Esophagus muscularis mucosa (tissue), 4 donors: ENCODE measurements at regions of chr2 and their contacts with region 1.

Region 1: GRCh38 chr2:207166039-207166348 is 246 bp upstream of the KLF7 start:
- DNase-seq: peak; percentile 100
- H3K4me3 ChIP-seq: peak overlapping the region; percentile 78 to 90 (median 82)
- H3K27ac ChIP-seq: peak overlapping the region; percentile 100
- H3K4me1 ChIP-seq: peaks cover 32 to 42% (median 40%) of the 10 kb centered on the region in 4 donors
- H3K27me3 ChIP-seq: no peaks in the 10 kb centered on the region
- CTCF ChIP-seq: no peak
- EP300 ChIP-seq: no peak
- POLR2A ChIP-seq: no peak

Region 2: GRCh38 chr2:207073801-207074678 is 92.0 kb before region 1 on chr2:
- intact Hi-C with region 1: loop called (anchors 10 kb)
- DNase-seq: no peak
- H3K4me3 ChIP-seq: peak overlapping the region in 1 of 4 donors; percentile 3
- H3K27ac ChIP-seq: peak overlapping the region in 3 of 4 donors; percentile 22 to 50 (median 39)
- H3K4me1 ChIP-seq: peaks cover 5 to 23% (median 19%) of the 10 kb centered on the region in 4 donors
- H3K27me3 ChIP-seq: no peaks in the 10 kb centered on the region
- CTCF ChIP-seq: no peak
- EP300 ChIP-seq: no peak
- POLR2A ChIP-seq: no peak

Region 3: DNA sequence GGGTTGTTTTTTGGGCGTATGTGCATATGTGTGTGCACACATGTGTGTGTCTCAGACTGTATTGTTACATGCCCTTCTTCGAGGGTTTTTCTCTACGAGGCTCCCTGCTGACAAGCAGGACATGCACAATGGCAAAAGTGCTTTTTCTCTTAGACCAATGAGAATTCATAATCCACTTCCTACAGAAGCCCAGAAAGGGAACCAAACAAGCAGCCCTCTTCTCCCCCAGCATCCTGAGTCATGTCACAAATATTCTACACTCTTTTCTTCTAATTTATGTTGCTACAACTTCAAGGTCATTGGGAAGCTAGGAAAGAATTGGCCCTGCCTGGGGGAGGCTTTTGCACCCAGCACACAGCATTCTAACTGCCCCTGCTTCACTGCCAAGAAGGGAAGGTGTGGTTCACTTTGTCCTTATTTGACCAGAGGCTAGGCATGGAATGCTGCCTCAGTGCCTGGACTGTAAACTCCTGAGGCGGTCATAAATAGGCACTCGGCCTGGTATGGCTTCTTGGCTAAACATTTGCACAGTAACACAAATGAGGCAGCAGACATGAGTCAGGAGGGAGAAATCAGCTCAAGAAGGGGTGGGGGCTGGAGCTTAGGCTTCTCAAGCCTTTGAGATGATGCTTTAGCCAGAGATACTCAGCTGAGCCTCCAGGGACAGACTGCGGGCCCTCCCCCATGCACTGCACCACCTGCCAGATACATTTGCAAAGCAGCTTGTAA is 92.4 kb after region 1 on chr2:
- intact Hi-C with region 1: loop called (anchors 5 kb)
- DNase-seq: peak; percentile 94
- H3K4me3 ChIP-seq: peak overlapping the region in 1 of 4 donors; percentile 9
- H3K27ac ChIP-seq: peak overlapping the region; percentile 84 to 88 (median 85)
- H3K4me1 ChIP-seq: peaks cover 40 to 70% (median 67%) of the 10 kb centered on the region in 4 donors
- H3K27me3 ChIP-seq: no peaks in the 10 kb centered on the region
- CTCF ChIP-seq: peak in 1 of 3 experiments; percentile 27
- EP300 ChIP-seq: peak; percentile 80
- POLR2A ChIP-seq: no peak

Region 4: DNA sequence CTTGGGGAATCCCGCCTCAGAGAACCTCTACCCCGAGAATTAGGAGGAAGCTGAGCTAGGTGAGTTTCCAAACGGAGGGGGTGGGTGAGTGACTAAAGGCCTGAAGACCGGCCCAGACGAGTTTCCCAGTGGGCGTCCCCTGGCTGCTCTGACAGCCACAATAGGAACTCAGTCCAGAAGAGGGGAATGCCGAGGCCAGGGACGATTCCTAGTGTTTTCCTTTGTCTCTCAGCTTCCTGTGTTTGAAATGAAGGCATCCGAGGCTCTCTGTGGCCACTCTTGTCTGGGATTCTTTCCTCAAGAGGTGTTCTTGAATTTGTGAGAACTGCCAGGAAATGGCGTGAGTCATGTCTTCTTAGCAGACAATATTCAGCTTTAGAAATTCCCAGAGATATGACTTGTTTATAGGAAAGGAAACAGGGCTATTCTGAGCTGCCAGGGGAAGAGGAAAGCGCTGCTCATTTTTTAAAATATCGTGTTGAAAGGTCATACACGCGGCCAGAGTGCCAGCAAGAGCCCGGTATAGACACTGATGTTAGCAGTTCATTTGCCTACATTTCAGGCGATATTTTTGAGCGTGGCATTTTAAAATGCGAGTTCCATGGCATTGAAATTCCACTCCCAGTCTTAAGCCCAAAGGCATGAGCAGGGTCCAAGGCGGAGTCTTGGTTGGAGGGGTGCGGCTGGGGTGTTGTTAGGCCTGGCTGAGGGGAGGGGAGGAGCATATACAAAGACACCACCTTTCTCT is 168.8 kb after region 1 on chr2:
- intact Hi-C with region 1: loop called (anchors 5 kb)
- DNase-seq: no peak
- H3K4me3 ChIP-seq: peak overlapping the region; percentile 22 to 47 (median 38)
- H3K27ac ChIP-seq: peak overlapping the region; percentile 77 to 87 (median 82)
- H3K4me1 ChIP-seq: peaks cover 20 to 34% (median 25%) of the 10 kb centered on the region in 4 donors
- H3K27me3 ChIP-seq: no peaks in the 10 kb centered on the region
- CTCF ChIP-seq: no peak
- EP300 ChIP-seq: peak; percentile 85
- POLR2A ChIP-seq: no peak